Naive thymus-derived CD4-positive, alpha-beta T cell (primary cell): ENCODE measurements at regions of chr17 and their contacts with region 1.

Region 1: DNA sequence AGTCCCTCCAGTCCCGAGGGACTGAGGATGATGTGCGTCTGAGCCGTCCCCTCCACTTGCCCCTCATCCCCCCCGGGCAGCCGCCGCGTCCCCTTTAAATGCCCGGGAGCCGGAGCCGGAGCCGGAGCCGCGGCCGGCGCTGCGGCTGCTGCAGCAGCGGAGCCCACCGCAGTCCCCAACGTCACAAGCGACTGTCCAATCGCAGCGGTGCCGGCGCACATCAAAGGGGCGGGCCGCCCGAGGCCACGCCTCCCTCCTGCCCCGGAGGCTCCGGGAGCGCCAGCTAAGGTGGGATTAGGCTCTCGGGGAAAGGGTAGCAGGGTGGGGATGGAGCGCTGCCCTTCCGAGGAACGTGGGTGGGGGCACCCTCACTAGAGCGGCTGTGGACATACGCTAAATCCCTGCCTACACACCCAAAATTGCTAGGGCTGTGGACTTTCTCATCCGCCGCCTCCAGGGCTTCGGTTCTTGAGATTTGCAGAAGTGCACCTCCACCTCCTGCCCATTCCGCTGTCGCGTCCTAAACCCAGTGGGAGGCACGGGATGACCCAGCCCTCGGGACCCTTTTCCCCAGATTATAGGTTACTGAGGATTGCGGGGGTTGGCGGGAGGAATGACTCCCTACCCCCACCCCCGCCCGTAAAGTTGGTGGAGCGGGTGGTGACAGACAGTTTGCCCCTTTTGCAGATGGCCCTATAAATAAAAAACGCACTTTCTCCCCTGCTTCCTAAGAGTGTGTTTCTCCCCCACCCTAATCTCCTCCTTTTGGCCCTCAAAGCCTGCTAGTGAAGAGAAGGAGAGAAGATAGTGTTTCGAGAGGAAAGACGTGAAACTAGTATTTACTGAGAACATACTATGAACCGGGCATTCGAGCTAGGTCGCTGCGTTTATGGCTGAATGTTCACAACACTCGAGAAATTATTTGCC is at the start of gene PHOSPHO1:
- DNase-seq: peak; percentile 70 to 88 (median 83)
- ATAC-seq: peak; percentile 97
- H3K4me3 ChIP-seq: peak within 1 kb of the TSS; percentile 62
- H3K4me3 Mint-ChIP-seq: peak within 1 kb of the TSS; percentile 81 to 94 (median 86)
- H3K27ac ChIP-seq: no peak within 1 kb of the TSS
- H3K27ac Mint-ChIP-seq: peak within 1 kb of the TSS in 7 of 9 donors; percentile 36 to 80 (median 52)
- H3K4me1 ChIP-seq: peaks cover 11 to 12% of the 10 kb centered on the region in 2 donors
- H3K4me1 Mint-ChIP-seq: peaks cover 0 to 26% (median 16%) of the 10 kb centered on the region in 7 donors
- H3K27me3 ChIP-seq: no peaks in the 10 kb centered on the region
- H3K27me3 Mint-ChIP-seq: peaks cover 0 to 43% (median 4%) of the 10 kb centered on the region in 5 donors
- total RNA-seq, gene PHOSPHO1: 0.17 TPM in 1 of 5 experiments, not detected in the others

Region 2: DNA sequence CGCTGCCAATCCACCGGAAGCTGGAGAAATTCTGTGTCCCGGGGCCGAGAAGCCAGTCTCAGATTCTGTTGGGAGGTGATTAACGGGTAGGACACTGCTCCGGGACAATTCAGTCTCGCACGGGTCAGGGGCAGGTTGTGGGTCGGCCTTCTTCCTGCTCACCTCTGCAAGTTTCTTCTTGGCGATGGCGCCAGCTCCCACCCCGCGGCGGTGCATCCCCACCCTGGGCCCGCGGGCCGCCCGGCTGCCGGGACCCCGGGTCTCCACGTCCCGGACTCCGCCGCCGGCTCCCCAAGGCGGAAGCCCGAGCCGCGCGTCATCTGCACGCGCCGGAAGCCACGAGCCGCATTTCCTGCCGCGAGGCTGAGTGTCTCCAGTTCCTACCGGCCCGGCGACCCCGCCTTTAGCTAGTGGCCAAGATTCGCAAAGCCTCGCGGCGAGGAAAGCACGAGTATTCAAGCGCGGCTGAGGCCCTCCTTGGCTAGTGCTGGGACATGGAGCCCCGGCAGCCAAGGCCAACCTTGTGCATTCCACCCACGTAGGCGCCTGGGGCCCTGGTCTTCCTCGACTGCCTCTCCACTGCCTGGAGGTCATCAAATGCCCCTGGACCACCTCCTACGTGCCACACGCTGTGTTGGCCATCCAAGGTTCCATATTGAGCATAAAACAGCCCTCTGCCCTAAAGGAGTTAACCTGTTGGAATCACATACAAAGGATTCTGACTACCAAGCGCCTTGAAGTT is 286.2 kb before region 1 on chr17 and contains the start of gene SNF8:
- CTCF ChIA-PET with region 1: no interaction called
- POLR2A ChIA-PET with region 1: interaction called, 3 read pairs
- intact Hi-C with region 1: loop called in 1 of 2 experiments (anchors 10 kb)
- DNase-seq: peak; percentile 84 to 96 (median 91)
- ATAC-seq: peak; percentile 97
- H3K4me3 ChIP-seq: peak within 1 kb of the TSS; percentile 100
- H3K4me3 Mint-ChIP-seq: peak within 1 kb of the TSS; percentile 92 to 100 (median 98)
- H3K27ac ChIP-seq: peak within 1 kb of the TSS; percentile 92
- H3K27ac Mint-ChIP-seq: peak within 1 kb of the TSS; percentile 89 to 99 (median 97)
- H3K4me1 ChIP-seq: peaks cover 11 to 14% of the 10 kb centered on the region in 2 donors
- H3K4me1 Mint-ChIP-seq: peaks cover 4 to 32% (median 12%) of the 10 kb centered on the region in 7 donors
- H3K27me3 ChIP-seq: no peaks in the 10 kb centered on the region
- H3K27me3 Mint-ChIP-seq: peaks cover 0 to 9% (median 0%) of the 10 kb centered on the region in 5 donors
- total RNA-seq, gene SNF8: 54.8 to 122 (median 60.3) TPM

Region 3: GRCh38 chr17:49197346-49197998 is 33.4 kb before region 1 on chr17:
- CTCF ChIA-PET with region 1: interaction called, 67 read pairs
- POLR2A ChIA-PET with region 1: interaction called, 80 read pairs
- intact Hi-C with region 1: loop called (anchors 1 kb)
- DNase-seq: no peak
- ATAC-seq: no peak
- H3K4me3 ChIP-seq: no peak overlapping the region
- H3K4me3 Mint-ChIP-seq: no peak overlapping the region
- H3K27ac ChIP-seq: no peak overlapping the region
- H3K27ac Mint-ChIP-seq: peak overlapping the region in 1 of 9 donors; percentile 81
- H3K4me1 ChIP-seq: peaks cover 0 to 6% of the 10 kb centered on the region in 2 donors
- H3K4me1 Mint-ChIP-seq: peaks cover 10 to 43% (median 14%) of the 10 kb centered on the region in 7 donors
- H3K27me3 ChIP-seq: no peaks in the 10 kb centered on the region
- H3K27me3 Mint-ChIP-seq: peaks cover 0 to 4% (median 0%) of the 10 kb centered on the region in 5 donors

Region 4: GRCh38 chr17:49217651-49218413 is 13.1 kb before region 1 on chr17:
- CTCF ChIA-PET with region 1: interaction called, 14 read pairs
- POLR2A ChIA-PET with region 1: interaction called, 4 read pairs
- intact Hi-C with region 1: loop called in 1 of 2 experiments (anchors 1 kb)
- DNase-seq: peak; percentile 41 to 84 (median 79)
- ATAC-seq: peak; percentile 87
- H3K4me3 ChIP-seq: no peak overlapping the region
- H3K4me3 Mint-ChIP-seq: peak overlapping the region; percentile 78 to 94 (median 84)
- H3K27ac ChIP-seq: peak overlapping the region; percentile 70
- H3K27ac Mint-ChIP-seq: peak overlapping the region; percentile 81 to 99 (median 92)
- H3K4me1 ChIP-seq: peaks cover 64 to 72% of the 10 kb centered on the region in 2 donors
- H3K4me1 Mint-ChIP-seq: peaks cover 56 to 74% (median 65%) of the 10 kb centered on the region in 7 donors
- H3K27me3 ChIP-seq: no peaks in the 10 kb centered on the region
- H3K27me3 Mint-ChIP-seq: no peaks in the 10 kb centered on the region

Region 5: DNA sequence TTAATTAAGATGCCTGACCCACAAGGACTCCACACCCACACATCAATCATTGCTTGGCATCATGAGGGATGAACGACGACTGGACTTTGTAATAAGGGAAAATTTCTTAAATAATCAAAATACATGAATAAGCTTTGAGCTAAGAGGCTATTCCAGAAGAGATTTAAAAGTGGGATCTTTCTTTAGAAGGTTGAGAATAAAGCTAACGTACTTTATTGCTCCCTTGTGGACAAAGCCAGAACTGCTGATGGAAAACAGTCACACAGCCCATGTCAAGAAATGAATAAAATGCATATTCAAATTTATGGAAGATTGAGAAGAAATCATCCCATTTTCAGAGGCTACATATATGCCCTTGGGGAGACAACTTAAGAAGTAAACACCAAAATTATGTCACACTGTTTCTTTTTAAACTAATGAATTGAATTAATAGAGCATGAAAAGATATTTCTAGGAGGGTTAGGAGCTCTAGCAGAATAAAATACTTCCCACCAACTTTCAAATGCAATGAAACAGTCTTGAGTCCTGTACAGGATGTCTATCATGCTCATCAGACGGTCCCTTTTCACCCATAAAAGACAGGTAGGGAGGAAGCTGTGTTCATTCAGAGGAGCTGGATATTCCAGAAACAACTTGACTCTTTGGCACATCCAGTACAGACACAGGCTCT is 59.9 kb after region 1 on chr17:
- CTCF ChIA-PET with region 1: interaction called, 7 read pairs
- POLR2A ChIA-PET with region 1: no interaction called
- intact Hi-C with region 1: loop called in 1 of 2 experiments (anchors 2 kb)
- DNase-seq: peak in 5 of 9 donors; percentile 2 to 13 (median 11)
- ATAC-seq: no peak
- H3K4me3 ChIP-seq: no peak overlapping the region
- H3K4me3 Mint-ChIP-seq: no peak overlapping the region
- H3K27ac ChIP-seq: no peak overlapping the region
- H3K27ac Mint-ChIP-seq: peak overlapping the region in 2 of 9 donors; percentile 11 to 23
- H3K4me1 ChIP-seq: no peaks in the 10 kb centered on the region
- H3K4me1 Mint-ChIP-seq: no peaks in the 10 kb centered on the region
- H3K27me3 ChIP-seq: no peaks in the 10 kb centered on the region
- H3K27me3 Mint-ChIP-seq: no peaks in the 10 kb centered on the region

Region 6: DNA sequence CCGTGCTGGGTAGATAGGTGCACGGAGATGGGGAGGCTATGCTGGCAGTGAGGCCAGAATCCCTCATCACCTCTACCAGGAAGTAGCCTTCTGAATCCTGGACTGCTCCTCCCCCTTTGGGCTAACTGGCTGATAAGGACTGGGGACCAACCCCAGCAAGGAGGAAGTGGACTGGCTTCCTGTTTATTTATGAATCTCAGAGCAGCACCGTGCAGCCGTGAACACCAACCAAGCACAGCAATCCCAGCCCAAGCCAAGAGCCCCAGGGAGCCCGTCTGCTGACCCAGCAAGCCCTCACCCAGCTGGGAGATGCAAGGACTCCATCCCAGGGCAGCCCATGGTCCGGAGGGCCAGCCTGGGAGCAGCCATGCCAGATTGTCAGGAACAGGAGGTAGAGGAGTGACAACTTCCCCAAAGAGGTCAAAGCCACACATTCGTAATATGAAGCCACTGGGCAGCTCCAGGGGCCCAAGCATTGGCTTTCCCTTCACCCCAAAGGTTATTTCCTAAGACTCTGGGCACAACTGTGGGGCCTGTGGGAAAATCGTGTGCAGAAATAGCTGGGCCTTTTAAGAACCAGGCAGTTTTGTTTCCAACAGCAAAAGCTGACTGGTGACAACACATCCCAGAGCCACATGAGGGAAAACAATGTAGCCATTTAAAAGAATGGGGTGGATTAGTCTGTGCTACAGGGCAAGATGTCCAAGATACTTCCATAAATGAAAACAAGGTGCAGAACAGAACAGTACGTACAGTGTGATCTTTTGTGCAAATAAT is 159.8 kb after region 1 on chr17:
- CTCF ChIA-PET with region 1: no interaction called
- POLR2A ChIA-PET with region 1: no interaction called
- intact Hi-C with region 1: loop called in 1 of 2 experiments (anchors 1 kb)
- DNase-seq: no peak
- ATAC-seq: peak; percentile 48
- H3K4me3 ChIP-seq: peak overlapping the region; percentile 29
- H3K4me3 Mint-ChIP-seq: peak overlapping the region; percentile 21 to 83 (median 58)
- H3K27ac ChIP-seq: no peak overlapping the region
- H3K27ac Mint-ChIP-seq: peak overlapping the region; percentile 44 to 93 (median 71)
- H3K4me1 ChIP-seq: peaks cover 43 to 51% of the 10 kb centered on the region in 2 donors
- H3K4me1 Mint-ChIP-seq: peaks cover 48 to 70% (median 63%) of the 10 kb centered on the region in 7 donors
- H3K27me3 ChIP-seq: no peaks in the 10 kb centered on the region
- H3K27me3 Mint-ChIP-seq: no peaks in the 10 kb centered on the region